ENCODE measurements at regions of chr2 and their contacts with region 1.

Region 1: GRCh38 chr2:237026981-237027711 is 58.5 kb upstream of the COPS8 start:
- DNase-seq: peak; percentile 65 to 69
- H3K4me3 ChIP-seq: no peak overlapping the region
- H3K4me3 Mint-ChIP-seq: no peak overlapping the region
- H3K27ac Mint-ChIP-seq: no peak overlapping the region
- H3K4me1 ChIP-seq: peaks cover 19% of the 10 kb centered on the region
- H3K4me1 Mint-ChIP-seq: no peaks in the 10 kb centered on the region
- H3K27me3 ChIP-seq: no peaks in the 10 kb centered on the region
- H3K27me3 Mint-ChIP-seq: no peaks in the 10 kb centered on the region
- CTCF ChIP-seq: peak; percentile 71 to 75

Region 2: DNA sequence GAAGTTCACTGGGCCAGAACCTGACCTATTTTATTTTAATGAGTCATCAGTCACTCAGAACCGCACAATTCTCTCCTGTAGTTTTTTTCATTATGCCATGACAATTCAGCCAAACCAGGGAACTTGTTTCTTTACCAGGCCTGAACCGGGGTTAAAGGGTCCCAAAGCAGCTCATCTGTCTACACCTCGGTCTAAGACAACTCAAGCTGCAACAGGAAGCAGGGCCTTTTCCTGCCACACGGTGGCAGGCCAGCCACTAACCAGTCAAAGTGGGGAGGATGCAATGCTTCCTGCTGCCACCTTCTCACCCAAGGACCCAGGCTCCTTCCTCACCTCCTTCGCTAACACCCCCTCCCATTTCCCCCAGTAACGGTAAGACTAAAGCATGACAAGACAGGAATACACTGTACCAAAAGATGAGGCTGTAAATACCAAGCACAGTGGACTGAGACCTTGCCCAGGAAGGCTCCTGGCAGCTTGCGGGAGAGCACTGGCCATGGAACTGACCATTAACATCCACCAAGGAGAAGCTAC is 514.2 kb before region 1 on chr2:
- CTCF ChIA-PET with region 1: no interaction called
- POLR2A ChIA-PET with region 1: no interaction called
- intact Hi-C with region 1: loop called (anchors 1 kb)
- DNase-seq: peak; percentile 51 to 53
- H3K4me3 ChIP-seq: no peak overlapping the region
- H3K4me3 Mint-ChIP-seq: no peak overlapping the region
- H3K27ac Mint-ChIP-seq: no peak overlapping the region
- H3K4me1 ChIP-seq: no peaks in the 10 kb centered on the region
- H3K4me1 Mint-ChIP-seq: no peaks in the 10 kb centered on the region
- H3K27me3 ChIP-seq: no peaks in the 10 kb centered on the region
- H3K27me3 Mint-ChIP-seq: no peaks in the 10 kb centered on the region
- CTCF ChIP-seq: peak; percentile 67 to 68

Region 3: DNA sequence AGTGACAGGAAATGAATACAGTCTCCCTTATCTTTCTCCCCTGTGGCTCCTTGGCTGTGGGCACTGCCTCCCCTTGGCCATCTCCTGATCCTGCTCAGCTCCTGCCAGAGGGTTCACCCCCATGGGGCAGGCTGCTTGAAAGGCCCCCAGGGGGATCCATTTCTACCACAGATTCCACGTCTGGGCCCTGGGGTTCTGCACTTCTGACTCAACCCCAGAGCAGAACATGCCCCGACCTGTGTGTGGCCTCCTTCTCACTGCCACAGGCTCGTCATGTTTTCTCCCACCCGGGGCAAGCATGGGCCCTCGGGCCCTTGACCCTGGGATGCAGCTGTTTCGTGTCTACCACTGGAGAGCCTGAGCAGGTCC is 335.4 kb before region 1 on chr2:
- CTCF ChIA-PET with region 1: no interaction called
- POLR2A ChIA-PET with region 1: no interaction called
- intact Hi-C with region 1: loop called (anchors 10 kb)
- DNase-seq: peak in 1 of 2 experiments; percentile 47
- H3K4me3 ChIP-seq: no peak overlapping the region
- H3K4me3 Mint-ChIP-seq: no peak overlapping the region
- H3K27ac Mint-ChIP-seq: peak overlapping the region; percentile 48
- H3K4me1 ChIP-seq: peaks cover 18% of the 10 kb centered on the region
- H3K4me1 Mint-ChIP-seq: peaks cover 13% of the 10 kb centered on the region
- H3K27me3 ChIP-seq: no peaks in the 10 kb centered on the region
- H3K27me3 Mint-ChIP-seq: no peaks in the 10 kb centered on the region
- CTCF ChIP-seq: no peak

Region 4: GRCh38 chr2:236718207-236718992 is 308.7 kb before region 1 on chr2:
- CTCF ChIA-PET with region 1: no interaction called
- POLR2A ChIA-PET with region 1: no interaction called
- intact Hi-C with region 1: no loop called
- DNase-seq: no peak
- H3K4me3 ChIP-seq: no peak overlapping the region
- H3K4me3 Mint-ChIP-seq: no peak overlapping the region
- H3K27ac Mint-ChIP-seq: no peak overlapping the region
- H3K4me1 ChIP-seq: peaks cover 12% of the 10 kb centered on the region
- H3K4me1 Mint-ChIP-seq: no peaks in the 10 kb centered on the region
- H3K27me3 ChIP-seq: no peaks in the 10 kb centered on the region
- H3K27me3 Mint-ChIP-seq: no peaks in the 10 kb centered on the region
- CTCF ChIP-seq: no peak

Region 5: GRCh38 chr2:236824877-236825692 is 202.1 kb before region 1 on chr2:
- CTCF ChIA-PET with region 1: no interaction called
- POLR2A ChIA-PET with region 1: no interaction called
- intact Hi-C with region 1: loop called (anchors 5 kb)
- DNase-seq: peak; percentile 32 to 49
- H3K4me3 ChIP-seq: no peak overlapping the region
- H3K4me3 Mint-ChIP-seq: no peak overlapping the region
- H3K27ac Mint-ChIP-seq: no peak overlapping the region
- H3K4me1 ChIP-seq: peaks cover 23% of the 10 kb centered on the region
- H3K4me1 Mint-ChIP-seq: peaks cover 9% of the 10 kb centered on the region
- H3K27me3 ChIP-seq: no peaks in the 10 kb centered on the region
- H3K27me3 Mint-ChIP-seq: no peaks in the 10 kb centered on the region
- CTCF ChIP-seq: no peak

Region 6: DNA sequence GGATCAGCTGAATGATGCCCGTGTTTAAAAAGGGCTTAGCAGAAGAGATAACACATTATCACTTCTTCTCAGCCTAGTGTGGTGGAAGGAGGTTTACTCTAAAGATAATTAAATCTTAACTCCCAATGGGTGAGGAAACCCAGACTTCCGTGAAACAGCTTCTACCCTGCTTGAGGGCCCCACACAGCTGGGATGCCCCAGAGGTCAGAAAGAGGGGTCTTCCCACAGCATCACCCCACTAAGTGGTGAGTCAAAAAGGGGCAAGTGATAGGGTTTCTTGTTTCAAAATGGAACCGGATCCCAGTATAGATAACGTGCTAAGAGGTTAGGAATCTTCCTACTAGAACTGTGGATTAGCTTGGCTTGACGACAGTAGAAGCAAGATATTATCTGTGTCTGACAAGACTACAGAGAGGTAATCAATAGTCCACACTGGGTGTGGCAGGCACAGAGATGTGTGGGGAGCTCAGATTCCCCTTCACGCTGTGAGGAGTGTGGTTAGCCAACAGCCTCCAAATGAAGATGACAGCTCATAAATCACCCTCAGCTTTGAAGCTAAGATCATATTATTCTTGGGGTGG is 71.0 kb before region 1 on chr2:
- CTCF ChIA-PET with region 1: no interaction called
- POLR2A ChIA-PET with region 1: no interaction called
- intact Hi-C with region 1: loop called (anchors 1 kb)
- DNase-seq: peak; percentile 65 to 83
- H3K4me3 ChIP-seq: no peak overlapping the region
- H3K4me3 Mint-ChIP-seq: peak overlapping the region; percentile 53
- H3K27ac Mint-ChIP-seq: peak overlapping the region; percentile 91
- H3K4me1 ChIP-seq: peaks cover 28% of the 10 kb centered on the region
- H3K4me1 Mint-ChIP-seq: peaks cover 16% of the 10 kb centered on the region
- H3K27me3 ChIP-seq: no peaks in the 10 kb centered on the region
- H3K27me3 Mint-ChIP-seq: no peaks in the 10 kb centered on the region
- CTCF ChIP-seq: no peak

Measured in Caco-2 (cell line).